ENCODE measurements at regions of chr1 and their contacts with region 1.

Region 1: DNA sequence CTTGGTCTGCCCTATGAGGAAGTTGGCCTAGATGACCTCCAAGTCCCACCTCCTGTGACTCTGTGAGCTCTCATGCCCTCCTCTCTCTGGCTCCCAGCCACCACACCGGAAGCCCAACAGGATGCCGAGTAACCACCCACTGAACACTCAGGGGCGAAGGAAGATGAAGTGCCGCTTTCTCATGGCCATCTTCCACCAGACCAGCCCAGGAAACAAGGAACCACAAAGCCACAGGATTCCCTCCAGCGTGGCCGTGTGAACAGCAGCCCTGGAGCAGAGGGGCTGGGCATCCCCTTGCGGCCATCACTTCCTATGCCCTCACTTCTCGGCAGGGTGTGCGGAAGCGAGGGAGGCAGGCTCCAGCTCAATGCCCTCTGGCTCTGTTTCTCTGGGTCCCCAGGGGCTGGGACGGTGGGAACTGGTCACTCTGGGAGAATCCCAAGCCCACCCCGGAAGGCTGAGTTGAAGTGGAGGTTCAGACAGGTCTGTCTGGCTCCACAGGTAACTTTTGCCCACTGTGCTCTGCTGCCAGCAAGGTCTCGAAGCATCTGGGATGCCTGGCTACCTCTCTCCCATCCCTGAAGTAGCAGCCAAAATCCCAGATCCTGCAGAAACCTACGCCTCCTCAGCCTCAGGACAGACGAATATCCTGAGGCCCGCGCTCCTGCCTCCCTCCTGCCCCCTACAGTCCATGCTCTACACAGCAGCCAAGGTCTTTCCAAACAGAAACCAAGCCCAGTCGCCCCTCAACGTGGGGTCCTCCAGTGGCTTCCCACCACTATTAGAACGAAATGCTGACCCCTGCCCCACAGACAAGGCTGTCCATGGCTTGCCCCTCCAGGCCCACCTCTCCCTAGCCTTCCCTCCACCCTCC is 44.2 kb upstream of the ECE1 start:
- DNase-seq: peak; percentile 58 to 84 (median 76)
- ATAC-seq: peak; percentile 88
- H3K4me3 ChIP-seq: peak overlapping the region; percentile 74
- H3K4me3 Mint-ChIP-seq: peak overlapping the region; percentile 82 to 97 (median 91)
- H3K27ac ChIP-seq: peak overlapping the region; percentile 81
- H3K27ac Mint-ChIP-seq: peak overlapping the region; percentile 92 to 99 (median 97)
- H3K4me1 ChIP-seq: peaks cover 41 to 78% of the 10 kb centered on the region in 2 donors
- H3K4me1 Mint-ChIP-seq: peaks cover 55 to 95% (median 85%) of the 10 kb centered on the region in 7 donors
- H3K27me3 ChIP-seq: no peaks in the 10 kb centered on the region
- H3K27me3 Mint-ChIP-seq: no peaks in the 10 kb centered on the region

Region 2: DNA sequence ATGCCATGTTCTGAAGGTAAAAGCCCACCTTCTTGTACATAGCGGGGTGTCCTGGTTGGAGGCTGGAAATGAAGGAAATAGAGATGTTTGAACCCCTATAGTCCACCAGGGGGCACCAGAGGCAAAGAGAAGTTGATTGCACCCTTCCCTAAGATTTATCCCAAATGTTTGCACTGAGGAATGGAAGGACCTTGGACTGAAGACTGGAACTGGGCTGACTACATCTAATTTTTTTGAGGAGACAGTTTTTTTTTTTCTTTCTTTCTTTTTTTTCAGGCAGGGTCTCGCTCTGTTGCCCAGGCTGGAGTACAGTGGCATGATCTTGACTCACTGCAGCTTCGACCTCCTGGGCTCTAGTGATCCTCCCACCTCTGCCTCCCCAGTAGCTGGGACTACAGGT is 102.4 kb before region 1 on chr1:
- CTCF ChIA-PET with region 1: interaction called, 3 read pairs
- POLR2A ChIA-PET with region 1: no interaction called
- intact Hi-C with region 1: loop called in 1 of 2 experiments (anchors 1 kb)
- DNase-seq: peak in 6 of 9 donors; percentile 20 to 53 (median 42)
- ATAC-seq: peak; percentile 76
- H3K4me3 ChIP-seq: no peak overlapping the region
- H3K4me3 Mint-ChIP-seq: no peak overlapping the region
- H3K27ac ChIP-seq: no peak overlapping the region
- H3K27ac Mint-ChIP-seq: peak overlapping the region in 2 of 9 donors; percentile 8 to 29
- H3K4me1 ChIP-seq: no peaks in the 10 kb centered on the region
- H3K4me1 Mint-ChIP-seq: no peaks in the 10 kb centered on the region
- H3K27me3 ChIP-seq: no peaks in the 10 kb centered on the region
- H3K27me3 Mint-ChIP-seq: no peaks in the 10 kb centered on the region

Region 3: DNA sequence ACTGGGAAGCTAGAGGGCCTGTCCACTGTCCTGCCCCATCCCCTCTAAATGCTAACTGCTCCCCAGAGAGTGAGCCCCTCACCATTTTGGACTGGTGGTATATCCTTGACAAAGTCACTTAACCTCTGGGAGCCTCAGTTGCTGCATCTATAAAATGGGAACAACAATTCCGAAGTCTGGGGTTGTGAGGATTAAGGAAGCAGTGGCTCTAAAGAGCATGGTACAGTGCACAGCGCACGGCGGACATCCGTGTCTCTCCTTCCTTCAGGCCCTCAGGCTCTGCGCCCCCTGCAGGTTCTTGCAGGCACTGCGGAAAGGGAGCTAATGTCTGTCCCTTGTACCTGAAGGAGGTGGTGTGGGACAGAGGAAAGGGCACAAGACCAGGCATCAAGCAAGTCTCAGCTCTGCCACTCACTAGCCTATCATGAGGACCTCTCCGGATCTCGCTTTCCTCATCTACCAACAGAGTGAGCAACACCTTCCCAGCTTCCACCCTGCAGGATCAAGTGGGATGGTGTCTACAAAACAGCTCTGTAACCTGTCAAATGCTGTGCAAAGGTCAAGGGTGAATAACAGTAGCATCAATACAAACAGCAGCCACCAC is 64.3 kb before region 1 on chr1:
- CTCF ChIA-PET with region 1: interaction called, 58 read pairs
- POLR2A ChIA-PET with region 1: interaction called, 9 read pairs
- intact Hi-C with region 1: loop called in 1 of 2 experiments (anchors 1 kb)
- DNase-seq: peak; percentile 67 to 87 (median 80)
- ATAC-seq: peak; percentile 95
- H3K4me3 ChIP-seq: no peak overlapping the region
- H3K4me3 Mint-ChIP-seq: peak overlapping the region in 2 of 10 donors; percentile 6 to 48
- H3K27ac ChIP-seq: no peak overlapping the region
- H3K27ac Mint-ChIP-seq: peak overlapping the region; percentile 8 to 80 (median 48)
- H3K4me1 ChIP-seq: peaks cover 0 to 18% of the 10 kb centered on the region in 2 donors
- H3K4me1 Mint-ChIP-seq: peaks cover 13 to 34% (median 18%) of the 10 kb centered on the region in 7 donors
- H3K27me3 ChIP-seq: no peaks in the 10 kb centered on the region
- H3K27me3 Mint-ChIP-seq: no peaks in the 10 kb centered on the region

Region 4: GRCh38 chr1:21280011-21280471 is 54.4 kb before region 1 on chr1:
- CTCF ChIA-PET with region 1: interaction called, 9 read pairs
- POLR2A ChIA-PET with region 1: interaction called, 13 read pairs
- intact Hi-C with region 1: no loop called
- DNase-seq: peak in 4 of 9 donors; percentile 15 to 22 (median 18)
- ATAC-seq: peak; percentile 68
- H3K4me3 ChIP-seq: peak overlapping the region; percentile 21
- H3K4me3 Mint-ChIP-seq: peak overlapping the region; percentile 61 to 82 (median 75)
- H3K27ac ChIP-seq: peak overlapping the region; percentile 66
- H3K27ac Mint-ChIP-seq: peak overlapping the region; percentile 93 to 99 (median 95)
- H3K4me1 ChIP-seq: peaks cover 34 to 37% of the 10 kb centered on the region in 2 donors
- H3K4me1 Mint-ChIP-seq: peaks cover 29 to 61% (median 54%) of the 10 kb centered on the region in 7 donors
- H3K27me3 ChIP-seq: no peaks in the 10 kb centered on the region
- H3K27me3 Mint-ChIP-seq: no peaks in the 10 kb centered on the region

Region 5: GRCh38 chr1:21552715-21553114 is 218.3 kb after region 1 on chr1:
- CTCF ChIA-PET with region 1: no interaction called
- POLR2A ChIA-PET with region 1: no interaction called
- intact Hi-C with region 1: no loop called
- DNase-seq: no peak
- ATAC-seq: no peak
- H3K4me3 ChIP-seq: no peak overlapping the region
- H3K4me3 Mint-ChIP-seq: no peak overlapping the region
- H3K27ac ChIP-seq: no peak overlapping the region
- H3K27ac Mint-ChIP-seq: no peak overlapping the region
- H3K4me1 ChIP-seq: no peaks in the 10 kb centered on the region
- H3K4me1 Mint-ChIP-seq: peaks cover 0 to 3% (median 0%) of the 10 kb centered on the region in 7 donors
- H3K27me3 ChIP-seq: no peaks in the 10 kb centered on the region
- H3K27me3 Mint-ChIP-seq: peaks cover 15 to 30% (median 22%) of the 10 kb centered on the region in 5 donors